IMR-90 (cell line): ENCODE measurements at regions of chr11 and their contacts with region 1.

Region 1: DNA sequence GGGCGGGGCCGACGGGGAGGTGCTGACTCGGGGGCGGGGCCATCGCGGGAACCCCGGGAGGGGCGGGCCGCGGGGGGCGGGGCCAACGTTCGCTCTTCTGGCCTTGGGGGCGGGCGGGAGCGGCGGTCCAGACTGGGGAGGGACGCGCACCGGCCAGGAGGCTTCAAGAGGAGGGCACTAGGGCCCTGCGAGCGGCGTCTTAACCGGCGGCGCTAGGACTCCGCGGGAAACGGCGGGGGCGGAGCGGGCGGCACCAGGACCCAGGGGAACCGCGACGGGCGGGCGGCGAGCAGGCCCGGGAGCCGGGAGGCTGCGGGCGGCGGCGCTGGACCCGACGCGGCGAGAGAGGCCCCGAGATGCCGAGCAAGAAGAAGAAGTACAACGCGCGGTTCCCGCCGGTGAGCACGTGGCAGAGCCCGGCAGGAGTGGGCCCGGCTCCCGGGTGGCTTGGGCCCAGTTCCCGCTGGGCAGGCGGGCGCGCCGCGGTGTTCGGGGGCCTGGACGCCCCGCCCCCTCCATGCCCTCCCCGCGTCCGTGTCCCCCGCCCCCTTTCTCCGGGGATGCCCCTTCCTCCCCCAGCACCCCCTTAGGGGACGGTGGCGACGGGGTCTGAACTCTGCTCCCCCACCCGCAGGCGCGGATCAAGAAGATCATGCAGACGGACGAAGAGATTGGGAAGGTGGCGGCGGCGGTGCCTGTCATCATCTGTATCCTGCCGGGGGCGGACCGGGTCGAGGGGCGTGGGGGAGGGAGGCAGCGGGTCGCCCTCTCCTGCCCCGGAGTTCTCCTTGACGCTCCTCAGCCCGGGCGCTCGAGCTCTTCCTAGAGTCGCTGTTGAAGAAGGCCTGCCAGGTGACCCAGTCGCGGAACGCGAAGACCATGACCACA is at the start of gene DRAP1:
- DNase-seq: peak; percentile 97
- ATAC-seq: peak; percentile 79
- H3K4me3 ChIP-seq: peak within 1 kb of the TSS; percentile 100
- H3K27ac ChIP-seq: peak within 1 kb of the TSS; percentile 93
- H3K4me1 ChIP-seq: peaks cover 42% of the 10 kb centered on the region
- H3K27me3 ChIP-seq: no peaks in the 10 kb centered on the region
- CTCF ChIP-seq: 0 out of 2 replicates have a peak, but pooled peaks have one; percentile 10
- POLR2A ChIP-seq: 0 out of 2 replicates have a peak, but pooled peaks have one; percentile 29
- RAD21 ChIP-seq: peak; percentile 43
- total RNA-seq, gene DRAP1: 237 and 339 TPM in 2 replicates

Region 2: DNA sequence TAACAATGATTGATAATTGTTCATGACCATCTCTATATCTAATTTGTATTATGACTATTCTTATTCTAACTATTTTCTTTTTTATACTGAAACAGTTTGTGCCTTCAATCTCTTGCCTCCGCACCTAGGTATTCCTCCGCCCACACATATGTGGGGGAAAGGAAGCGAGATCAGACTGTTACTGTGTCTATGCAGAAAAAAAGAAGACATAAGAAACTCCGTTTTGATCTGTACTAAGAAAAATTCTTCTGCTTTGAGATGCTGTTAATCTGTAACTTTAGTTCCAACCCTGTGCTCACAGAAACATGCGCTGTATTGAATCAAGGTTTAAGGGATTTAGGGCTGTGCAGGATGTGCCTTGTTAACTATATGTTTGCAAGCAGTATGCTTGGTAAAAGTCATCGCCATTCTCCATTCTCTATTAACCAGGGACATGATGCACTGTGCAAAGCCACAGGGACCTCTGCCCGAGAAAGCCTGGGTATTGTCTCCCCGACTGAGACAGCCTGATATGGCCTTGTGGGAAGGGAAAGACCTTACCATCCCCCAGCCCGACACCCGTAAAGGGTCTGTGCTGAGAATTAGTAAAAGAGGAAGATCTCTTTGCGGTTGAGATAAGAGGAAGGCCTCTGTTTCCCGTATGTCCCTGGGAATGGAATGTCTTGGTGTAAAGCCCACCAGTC is 396.6 kb before region 1 on chr11:
- CTCF ChIA-PET with region 1: no interaction called
- POLR2A ChIA-PET with region 1: no interaction called
- dilution Hi-C with region 1: no loop called
- in situ Hi-C with region 1: no loop called
- intact Hi-C with region 1: no loop called
- DNase-seq: no peak
- ATAC-seq: no peak
- H3K4me3 ChIP-seq: no peak overlapping the region
- H3K27ac ChIP-seq: no peak overlapping the region
- H3K4me1 ChIP-seq: peaks cover 12% of the 10 kb centered on the region
- H3K27me3 ChIP-seq: no peaks in the 10 kb centered on the region
- CTCF ChIP-seq: no peak
- POLR2A ChIP-seq: no peak
- RAD21 ChIP-seq: no peak

Region 3: GRCh38 chr11:65859200-65859811 is 60.1 kb before region 1 on chr11:
- CTCF ChIA-PET with region 1: no interaction called
- POLR2A ChIA-PET with region 1: no interaction called
- dilution Hi-C with region 1: no loop called
- in situ Hi-C with region 1: no loop called
- intact Hi-C with region 1: loop called (anchors 1 kb)
- DNase-seq: peak; percentile 98
- ATAC-seq: peak; percentile 67
- H3K4me3 ChIP-seq: peak overlapping the region; percentile 95
- H3K27ac ChIP-seq: peak overlapping the region; percentile 97
- H3K4me1 ChIP-seq: peaks cover 11% of the 10 kb centered on the region
- H3K27me3 ChIP-seq: no peaks in the 10 kb centered on the region
- CTCF ChIP-seq: no peak
- POLR2A ChIP-seq: peak; percentile 79
- RAD21 ChIP-seq: no peak

Region 4: GRCh38 chr11:65900125-65900898 is 19.1 kb before region 1 on chr11 and contains the start of gene FOSL1:
- CTCF ChIA-PET with region 1: no interaction called
- POLR2A ChIA-PET with region 1: interaction called, 17 read pairs
- dilution Hi-C with region 1: no loop called
- in situ Hi-C with region 1: no loop called
- intact Hi-C with region 1: loop called (anchors 2 kb)
- DNase-seq: peak; percentile 97
- ATAC-seq: peak; percentile 78
- H3K4me3 ChIP-seq: peak within 1 kb of the TSS; percentile 98
- H3K27ac ChIP-seq: peak within 1 kb of the TSS; percentile 100
- H3K4me1 ChIP-seq: peaks cover 38% of the 10 kb centered on the region
- H3K27me3 ChIP-seq: no peaks in the 10 kb centered on the region
- CTCF ChIP-seq: no peak
- POLR2A ChIP-seq: peak; percentile 99
- RAD21 ChIP-seq: 0 out of 2 replicates have a peak, but pooled peaks have one; percentile 1
- total RNA-seq, gene FOSL1: 17.2 and 26.1 TPM in 2 replicates

Region 5: DNA sequence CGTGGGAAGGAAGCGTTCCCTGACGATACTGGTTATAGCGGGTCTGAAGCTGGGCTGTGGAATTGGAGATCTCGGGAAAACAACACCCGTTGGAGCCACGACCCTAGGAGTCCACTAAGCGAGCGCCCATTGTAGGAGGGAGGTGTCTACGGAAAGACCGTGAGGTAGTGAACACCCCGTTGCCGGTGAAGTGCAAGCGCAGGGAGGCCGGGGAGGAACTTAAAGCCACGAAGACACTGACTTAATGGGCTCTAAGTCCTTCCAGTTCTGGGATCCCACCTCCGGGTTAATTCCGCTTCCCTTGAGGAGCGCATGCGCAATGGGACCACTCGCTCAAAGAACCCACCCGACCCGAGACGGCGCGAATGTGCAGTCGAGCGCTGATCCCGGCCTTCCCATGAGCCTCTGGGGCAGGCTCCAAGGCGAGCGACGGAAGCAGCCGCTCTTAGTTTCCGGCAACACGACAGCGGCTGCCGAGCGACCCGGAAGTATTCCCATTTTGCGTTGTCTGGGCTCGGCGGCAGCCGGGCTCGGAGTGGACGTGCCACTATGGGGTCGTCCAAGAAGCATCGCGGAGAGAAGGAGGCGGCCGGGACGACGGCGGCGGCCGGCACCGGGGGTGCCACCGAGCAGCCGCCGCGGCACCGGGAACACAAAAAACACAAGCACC is 42.0 kb after region 1 on chr11 and contains the start of gene SART1:
- CTCF ChIA-PET with region 1: no interaction called
- POLR2A ChIA-PET with region 1: interaction called, 3 read pairs
- dilution Hi-C with region 1: no loop called
- in situ Hi-C with region 1: no loop called
- intact Hi-C with region 1: loop called (anchors 5 kb)
- DNase-seq: peak; percentile 97
- ATAC-seq: peak; percentile 96
- H3K4me3 ChIP-seq: peak within 1 kb of the TSS; percentile 59
- H3K27ac ChIP-seq: peak within 1 kb of the TSS; percentile 98
- H3K4me1 ChIP-seq: peaks cover 8% of the 10 kb centered on the region
- H3K27me3 ChIP-seq: no peaks in the 10 kb centered on the region
- CTCF ChIP-seq: no peak
- POLR2A ChIP-seq: peak; percentile 89
- RAD21 ChIP-seq: peak; percentile 11
- total RNA-seq, gene SART1: 25.5 and 32.5 TPM in 2 replicates

Region 6: GRCh38 chr11:67640021-67640757 is 1720.8 kb after region 1 on chr11:
- CTCF ChIA-PET with region 1: no interaction called
- POLR2A ChIA-PET with region 1: no interaction called
- dilution Hi-C with region 1: no loop called
- in situ Hi-C with region 1: no loop called
- intact Hi-C with region 1: no loop called
- DNase-seq: peak; percentile 33
- ATAC-seq: peak; percentile 98
- H3K4me3 ChIP-seq: no peak overlapping the region
- H3K27ac ChIP-seq: no peak overlapping the region
- H3K4me1 ChIP-seq: no peaks in the 10 kb centered on the region
- H3K27me3 ChIP-seq: peaks cover 14% of the 10 kb centered on the region; the same call in 1 of the 2 replicates
- CTCF ChIP-seq: peak; percentile 56
- POLR2A ChIP-seq: no peak
- RAD21 ChIP-seq: peak; percentile 53